ENCODE measurements at regions of chr2 and their contacts with region 1.

Region 1: GRCh38 chr2:215454519-215455246 is 18.8 kb upstream of the FN1 start:
- DNase-seq: no peak
- ATAC-seq: no peak
- H3K4me3 Mint-ChIP-seq: no peak overlapping the region
- H3K27ac Mint-ChIP-seq: no peak overlapping the region
- H3K4me1 Mint-ChIP-seq: no peaks in the 10 kb centered on the region
- H3K27me3 Mint-ChIP-seq: peaks cover 13% of the 10 kb centered on the region
- CTCF ChIP-seq: peak; percentile 69

Region 2: DNA sequence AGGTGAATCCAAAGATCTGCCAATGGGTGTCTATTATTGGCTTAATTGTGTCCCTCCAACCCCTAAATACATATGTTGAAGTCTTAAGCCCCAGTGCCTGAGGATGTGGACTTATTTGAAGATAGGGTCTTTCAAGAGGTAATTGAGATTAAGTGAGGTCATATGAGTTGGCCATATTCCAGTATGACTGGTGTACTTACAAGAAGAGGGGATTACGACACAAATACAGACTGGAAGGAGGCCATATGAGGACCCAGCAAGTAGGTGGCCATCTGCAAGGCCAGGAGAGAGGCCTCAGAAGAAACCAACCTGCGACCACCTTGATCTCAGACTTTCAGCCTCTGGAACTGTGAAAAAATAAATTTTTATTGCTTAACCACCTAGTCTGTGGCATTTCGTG is 102.3 kb after region 1 on chr2:
- CTCF ChIA-PET with region 1: no interaction called
- POLR2A ChIA-PET with region 1: no interaction called
- intact Hi-C with region 1: no loop called
- DNase-seq: no peak
- ATAC-seq: no peak
- H3K4me3 Mint-ChIP-seq: no peak overlapping the region
- H3K27ac Mint-ChIP-seq: no peak overlapping the region
- H3K4me1 Mint-ChIP-seq: no peaks in the 10 kb centered on the region
- H3K27me3 Mint-ChIP-seq: no peaks in the 10 kb centered on the region
- CTCF ChIP-seq: no peak

Region 3: GRCh38 chr2:215828517-215829184 is 374.0 kb after region 1 on chr2:
- CTCF ChIA-PET with region 1: no interaction called
- POLR2A ChIA-PET with region 1: no interaction called
- intact Hi-C with region 1: loop called (anchors 10 kb)
- DNase-seq: peak; percentile 57
- ATAC-seq: peak; percentile 60
- H3K4me3 Mint-ChIP-seq: no peak overlapping the region
- H3K27ac Mint-ChIP-seq: no peak overlapping the region
- H3K4me1 Mint-ChIP-seq: no peaks in the 10 kb centered on the region
- H3K27me3 Mint-ChIP-seq: peaks cover 2% of the 10 kb centered on the region
- CTCF ChIP-seq: peak; percentile 57

Region 4: DNA sequence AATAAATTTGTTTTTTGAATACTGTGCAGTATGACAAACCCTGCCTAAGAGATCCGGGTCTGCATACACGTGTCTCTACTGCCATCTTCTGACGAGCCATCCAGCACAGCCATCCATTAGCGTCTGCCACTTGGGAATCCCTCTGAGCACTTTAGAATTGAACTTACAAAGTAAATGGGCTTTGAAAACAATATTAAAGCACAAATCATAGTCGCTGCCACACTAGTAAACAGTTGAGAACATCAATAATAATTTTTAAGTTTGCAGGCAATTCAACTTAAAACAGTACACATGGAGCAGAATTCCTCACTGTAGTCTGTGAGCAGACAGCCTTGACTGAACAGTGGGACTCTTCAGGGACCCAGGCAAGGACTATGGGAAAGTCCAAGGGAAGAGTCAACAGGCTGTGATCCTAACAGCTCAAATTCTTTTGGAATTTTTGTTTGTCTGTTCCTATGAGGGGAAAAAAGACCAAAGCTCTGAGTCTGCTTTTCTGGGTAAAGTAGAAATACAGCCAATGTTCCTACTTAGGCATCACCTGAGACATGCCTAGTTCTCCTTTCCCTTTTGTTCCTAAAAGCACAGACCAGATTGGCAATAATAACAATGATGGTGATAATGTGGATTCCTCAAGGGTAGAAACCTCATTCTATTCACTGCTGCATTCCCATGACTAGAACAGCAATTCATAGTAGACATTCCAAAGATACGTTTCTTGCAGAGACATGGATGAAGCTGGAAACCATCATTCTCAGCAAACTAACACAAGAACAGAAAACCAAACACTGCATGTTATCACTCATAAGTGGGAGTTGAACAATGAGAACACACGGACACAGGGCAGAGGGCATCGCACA is 465.8 kb after region 1 on chr2:
- CTCF ChIA-PET with region 1: interaction called, 5 read pairs
- POLR2A ChIA-PET with region 1: no interaction called
- intact Hi-C with region 1: loop called (anchors 5 kb)
- DNase-seq: peak; percentile 72
- ATAC-seq: peak; percentile 79
- H3K4me3 Mint-ChIP-seq: no peak overlapping the region
- H3K27ac Mint-ChIP-seq: no peak overlapping the region
- H3K4me1 Mint-ChIP-seq: peaks cover 2% of the 10 kb centered on the region
- H3K27me3 Mint-ChIP-seq: peaks cover 1% of the 10 kb centered on the region
- CTCF ChIP-seq: peak; percentile 83

Region 5: DNA sequence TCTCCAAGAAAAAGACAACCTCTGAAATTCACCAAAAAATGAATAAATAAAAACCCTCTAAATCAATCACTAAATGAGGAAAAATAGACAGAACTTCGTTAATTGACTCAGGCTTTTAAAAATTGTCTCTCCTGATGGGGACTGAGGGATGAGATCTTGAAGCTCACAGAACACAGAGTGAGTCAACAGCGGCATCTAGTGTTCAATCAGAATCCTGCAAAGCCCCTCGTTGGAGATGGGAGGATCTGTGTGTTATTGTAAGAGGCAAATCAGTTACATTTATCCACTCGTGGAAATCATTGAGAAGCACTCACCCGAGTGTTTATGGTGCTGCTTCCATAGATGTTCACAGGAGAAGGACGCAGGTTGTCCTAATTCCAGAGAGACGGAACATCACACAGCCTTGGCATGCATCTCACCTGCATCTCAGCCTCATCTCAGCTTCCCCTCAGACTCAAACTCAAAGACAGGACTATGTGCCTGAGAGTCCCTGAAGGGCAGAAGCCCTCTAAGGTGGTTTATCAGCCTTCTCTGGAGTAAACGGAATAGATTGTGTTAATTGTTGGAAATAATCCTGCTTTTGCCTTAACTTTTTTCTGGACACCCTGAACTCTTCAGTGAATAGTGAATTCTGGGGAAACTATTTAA is 476.7 kb after region 1 on chr2:
- CTCF ChIA-PET with region 1: interaction called, 5 read pairs
- POLR2A ChIA-PET with region 1: no interaction called
- intact Hi-C with region 1: loop called (anchors 5 kb)
- DNase-seq: peak; percentile 72
- ATAC-seq: peak; percentile 82
- H3K4me3 Mint-ChIP-seq: no peak overlapping the region
- H3K27ac Mint-ChIP-seq: no peak overlapping the region
- H3K4me1 Mint-ChIP-seq: peaks cover 9% of the 10 kb centered on the region
- H3K27me3 Mint-ChIP-seq: no peaks in the 10 kb centered on the region
- CTCF ChIP-seq: peak; percentile 97